Caco-2 (cell line): ENCODE measurements at regions of chr11 and their contacts with region 1.

Region 1: DNA sequence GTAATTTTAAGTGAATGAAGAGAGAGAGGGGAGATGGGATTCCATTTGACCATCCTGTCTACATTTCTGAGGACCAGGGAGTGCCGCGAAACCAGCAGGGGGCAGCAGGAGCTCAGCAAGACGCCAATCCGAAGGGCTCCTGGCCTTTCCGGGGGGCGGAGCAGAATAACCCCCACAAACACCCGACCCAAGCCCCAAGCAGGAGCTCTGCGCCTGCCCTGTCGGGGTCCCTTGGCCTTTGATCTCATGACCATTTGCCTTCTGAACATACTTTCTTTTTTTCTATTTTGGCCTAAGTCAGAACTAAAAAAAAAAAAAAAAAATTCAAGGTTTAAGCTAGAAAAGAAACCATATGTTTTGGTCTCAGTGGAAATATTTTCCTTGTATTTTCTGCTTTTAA is 21.9 kb upstream of the SCN2B start:
- DNase-seq: peak; percentile 91 to 94
- H3K4me3 ChIP-seq: no peak overlapping the region
- H3K4me3 Mint-ChIP-seq: peak overlapping the region; percentile 2
- H3K27ac Mint-ChIP-seq: peak overlapping the region; percentile 36
- H3K4me1 ChIP-seq: peaks cover 85% of the 10 kb centered on the region
- H3K4me1 Mint-ChIP-seq: peaks cover 44% of the 10 kb centered on the region
- H3K27me3 ChIP-seq: no peaks in the 10 kb centered on the region
- H3K27me3 Mint-ChIP-seq: no peaks in the 10 kb centered on the region
- CTCF ChIP-seq: peak; percentile 99

Region 2: DNA sequence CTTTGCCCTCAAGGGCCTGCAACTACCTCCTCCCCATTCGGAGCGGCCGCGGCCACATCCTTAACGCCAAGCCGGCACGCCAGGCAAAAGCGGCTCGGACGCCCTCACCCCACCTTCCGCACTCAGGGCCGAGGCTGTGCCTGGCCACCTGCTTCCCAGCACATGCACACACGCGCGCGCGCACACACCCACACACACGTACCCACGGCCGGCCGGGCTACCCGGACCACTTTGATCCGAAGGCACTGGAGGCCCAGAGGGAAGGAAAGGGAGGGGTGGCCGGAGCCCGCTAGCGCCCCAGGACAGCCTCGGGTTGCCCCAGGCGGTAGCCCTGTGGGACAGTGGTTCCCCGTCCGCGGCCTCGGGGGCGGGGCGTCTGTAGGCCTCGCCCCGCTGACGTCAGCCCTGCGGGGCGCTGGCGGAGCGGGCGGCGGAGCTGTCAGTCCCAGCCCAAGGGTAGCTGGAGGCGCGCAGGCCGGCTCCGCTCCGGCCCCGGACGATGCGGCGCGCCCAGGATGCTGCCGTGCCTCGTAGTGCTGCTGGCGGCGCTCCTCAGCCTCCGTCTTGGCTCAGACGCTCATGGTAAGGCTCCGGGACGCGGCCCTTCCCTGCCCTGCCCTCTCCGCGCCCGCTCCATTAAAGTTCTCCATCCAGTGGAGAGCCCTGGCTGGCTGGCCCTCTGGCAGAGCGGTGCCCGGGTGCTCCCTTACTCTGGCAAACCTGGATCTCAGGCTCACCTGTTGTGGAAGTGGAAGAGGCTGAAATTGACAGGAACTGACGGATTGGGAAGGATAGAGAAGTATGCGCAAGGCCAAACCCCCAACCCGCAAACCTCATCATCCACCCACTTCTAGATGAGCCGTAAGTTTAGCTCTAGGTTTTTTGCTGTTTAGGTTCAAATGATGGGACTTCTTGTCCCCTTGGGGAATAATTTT is 212.2 kb before region 1 on chr11 and contains the start of gene IL10RA:
- CTCF ChIA-PET with region 1: no interaction called
- POLR2A ChIA-PET with region 1: no interaction called
- intact Hi-C with region 1: no loop called
- DNase-seq: peak; percentile 87 to 95
- H3K4me3 ChIP-seq: peak within 1 kb of the TSS; percentile 74
- H3K4me3 Mint-ChIP-seq: peak within 1 kb of the TSS; percentile 60
- H3K27ac Mint-ChIP-seq: peak within 1 kb of the TSS; percentile 48
- H3K4me1 ChIP-seq: peaks cover 17% of the 10 kb centered on the region
- H3K4me1 Mint-ChIP-seq: peaks cover 19% of the 10 kb centered on the region
- H3K27me3 ChIP-seq: peaks cover 3% of the 10 kb centered on the region; the same call in 1 of the 2 replicates
- H3K27me3 Mint-ChIP-seq: peaks cover 18% of the 10 kb centered on the region
- CTCF ChIP-seq: no peak
- total RNA-seq, gene IL10RA: 0.65 and 1.6 TPM in 2 replicates

Region 3: DNA sequence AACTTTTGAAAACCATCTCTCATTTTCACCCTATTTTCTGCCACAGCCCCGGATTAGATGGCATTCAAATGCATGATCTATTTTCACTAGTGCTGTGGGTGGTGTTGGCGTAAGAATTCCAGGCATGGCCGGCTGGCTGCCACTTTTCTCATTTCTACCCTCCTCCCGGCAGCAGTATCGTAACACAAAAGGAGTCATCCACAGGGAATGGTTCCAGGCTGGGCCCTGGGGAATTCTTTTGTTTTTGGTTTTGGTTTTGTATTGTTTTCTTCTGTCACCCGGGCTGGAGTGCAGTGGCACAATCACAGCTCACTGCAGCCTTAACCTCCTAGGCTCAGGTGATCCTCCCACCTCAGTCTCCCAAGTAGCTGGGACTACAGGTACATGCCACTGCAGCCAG is 12.6 kb after region 1 on chr11:
- CTCF ChIA-PET with region 1: interaction called, 75 read pairs
- POLR2A ChIA-PET with region 1: interaction called, 13 read pairs
- intact Hi-C with region 1: loop called (anchors 1 kb)
- DNase-seq: no peak
- H3K4me3 ChIP-seq: no peak overlapping the region
- H3K4me3 Mint-ChIP-seq: no peak overlapping the region
- H3K27ac Mint-ChIP-seq: peak overlapping the region; percentile 67
- H3K4me1 ChIP-seq: peaks cover 78% of the 10 kb centered on the region
- H3K4me1 Mint-ChIP-seq: peaks cover 53% of the 10 kb centered on the region
- H3K27me3 ChIP-seq: no peaks in the 10 kb centered on the region
- H3K27me3 Mint-ChIP-seq: no peaks in the 10 kb centered on the region
- CTCF ChIP-seq: no peak

Region 4: DNA sequence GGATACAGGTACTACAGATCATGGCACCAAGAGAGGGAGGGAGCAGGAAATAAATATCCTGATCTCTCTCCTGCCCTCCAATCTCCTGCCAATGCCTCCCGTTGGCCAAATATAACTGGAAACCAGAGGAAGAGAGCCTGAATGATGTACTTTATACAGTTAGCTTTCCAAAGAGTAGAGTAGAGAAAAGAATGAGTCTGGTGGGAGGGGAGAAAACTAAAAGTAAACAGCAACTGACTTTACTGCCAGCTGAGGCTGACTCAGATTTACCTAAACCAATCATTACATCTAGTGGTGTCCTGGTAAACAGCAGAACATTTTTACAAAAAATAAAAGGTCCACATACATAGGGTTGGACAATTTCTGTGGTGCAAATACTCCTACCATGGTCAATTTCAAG is 48.7 kb after region 1 on chr11:
- CTCF ChIA-PET with region 1: interaction called, 35 read pairs
- POLR2A ChIA-PET with region 1: interaction called, 16 read pairs
- intact Hi-C with region 1: loop called (anchors 1 kb)
- DNase-seq: no peak
- H3K4me3 ChIP-seq: no peak overlapping the region
- H3K4me3 Mint-ChIP-seq: no peak overlapping the region
- H3K27ac Mint-ChIP-seq: no peak overlapping the region
- H3K4me1 ChIP-seq: peaks cover 15% of the 10 kb centered on the region
- H3K4me1 Mint-ChIP-seq: peaks cover 51% of the 10 kb centered on the region
- H3K27me3 ChIP-seq: no peaks in the 10 kb centered on the region
- H3K27me3 Mint-ChIP-seq: no peaks in the 10 kb centered on the region
- CTCF ChIP-seq: no peak

Region 5: DNA sequence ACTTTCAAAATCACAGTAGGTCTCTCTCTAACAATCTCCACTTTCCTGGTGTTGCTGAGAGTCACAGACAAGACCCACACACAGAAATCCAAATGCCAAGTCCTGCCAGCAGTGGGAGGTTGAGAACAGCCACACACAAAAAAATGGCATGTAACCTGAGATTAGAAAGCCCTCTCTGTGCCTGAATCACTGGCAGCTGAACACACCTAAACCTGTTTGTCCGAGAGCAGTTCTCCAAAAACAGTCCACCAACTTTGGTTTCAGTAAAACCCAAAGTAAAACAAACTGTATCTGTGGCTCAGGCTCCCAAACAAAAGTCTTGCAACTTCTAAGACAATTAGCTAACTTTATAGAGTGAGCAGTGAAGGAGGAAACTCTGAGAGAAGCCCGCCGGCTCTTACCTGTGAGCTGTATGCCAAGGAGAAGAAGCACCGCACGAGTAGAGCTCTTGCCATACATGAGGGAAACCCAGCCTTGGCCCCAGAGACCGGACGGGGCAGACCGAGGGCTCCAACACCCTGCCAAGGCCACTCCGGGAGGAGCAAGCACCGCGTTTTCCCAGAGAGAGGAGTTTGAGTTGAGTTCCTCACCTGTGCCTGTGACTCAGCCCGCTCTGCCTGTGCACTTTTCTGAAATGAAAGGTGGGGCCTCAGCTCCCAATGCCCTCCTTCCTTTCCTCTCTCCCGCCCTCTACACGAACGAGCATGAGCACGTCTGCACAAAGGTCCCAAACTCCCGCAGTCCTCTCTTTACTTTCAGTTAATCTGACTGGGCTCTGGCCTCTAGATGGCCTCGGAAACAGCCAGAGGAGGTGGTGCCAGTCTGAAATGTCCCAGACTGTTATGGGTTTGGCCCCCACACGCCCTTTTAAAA is 65.6 kb after region 1 on chr11 and contains the start of gene MPZL2:
- CTCF ChIA-PET with region 1: interaction called, 34 read pairs
- POLR2A ChIA-PET with region 1: interaction called, 4 read pairs
- intact Hi-C with region 1: loop called (anchors 1 kb)
- DNase-seq: peak; percentile 90 to 93
- H3K4me3 ChIP-seq: peak within 1 kb of the TSS; percentile 83
- H3K4me3 Mint-ChIP-seq: peak within 1 kb of the TSS; percentile 91
- H3K27ac Mint-ChIP-seq: peak within 1 kb of the TSS; percentile 96
- H3K4me1 ChIP-seq: peaks cover 23% of the 10 kb centered on the region; the same call in 1 of the 2 replicates
- H3K4me1 Mint-ChIP-seq: peaks cover 15% of the 10 kb centered on the region
- H3K27me3 ChIP-seq: no peaks in the 10 kb centered on the region
- H3K27me3 Mint-ChIP-seq: no peaks in the 10 kb centered on the region
- CTCF ChIP-seq: peak; percentile 30 to 59
- total RNA-seq, gene MPZL2: 69.9 and 80.2 TPM in 2 replicates

Region 6: DNA sequence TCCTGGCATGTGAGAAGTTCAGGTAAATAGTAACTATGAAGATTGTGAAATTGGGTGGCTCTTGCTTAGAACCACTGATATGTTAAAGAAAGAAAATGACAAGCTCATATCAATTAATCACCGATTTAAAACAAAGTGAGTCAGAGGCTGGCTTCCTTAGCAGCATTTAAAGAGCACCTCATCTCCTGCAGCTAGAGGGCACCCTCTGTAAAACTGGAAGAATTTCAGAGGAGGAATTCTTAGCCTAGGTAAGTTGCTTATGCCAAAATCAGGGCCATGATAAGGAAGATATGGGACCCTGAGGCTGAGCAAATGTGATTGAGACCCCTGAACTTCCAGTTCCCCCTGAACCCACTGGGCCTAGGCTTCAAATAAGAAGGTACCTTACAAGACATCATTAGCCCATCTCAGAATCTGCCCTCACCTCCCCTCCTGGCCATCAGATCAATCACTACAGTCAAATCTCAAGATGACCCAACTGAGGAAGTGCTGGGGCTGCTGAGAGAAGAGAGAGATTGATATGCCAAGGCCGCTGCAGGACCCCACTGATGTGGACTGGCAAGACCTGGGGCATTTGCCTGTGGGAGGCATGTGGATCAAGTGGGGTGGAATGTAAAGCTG is 97.6 kb after region 1 on chr11:
- CTCF ChIA-PET with region 1: interaction called, 41 read pairs
- POLR2A ChIA-PET with region 1: no interaction called
- intact Hi-C with region 1: loop called (anchors 1 kb)
- DNase-seq: peak; percentile 63 to 69
- H3K4me3 ChIP-seq: no peak overlapping the region
- H3K4me3 Mint-ChIP-seq: no peak overlapping the region
- H3K27ac Mint-ChIP-seq: peak overlapping the region; percentile 14
- H3K4me1 ChIP-seq: peaks cover 9% of the 10 kb centered on the region
- H3K4me1 Mint-ChIP-seq: peaks cover 18% of the 10 kb centered on the region
- H3K27me3 ChIP-seq: no peaks in the 10 kb centered on the region
- H3K27me3 Mint-ChIP-seq: no peaks in the 10 kb centered on the region
- CTCF ChIP-seq: peak; percentile 73 to 86

Region 7: DNA sequence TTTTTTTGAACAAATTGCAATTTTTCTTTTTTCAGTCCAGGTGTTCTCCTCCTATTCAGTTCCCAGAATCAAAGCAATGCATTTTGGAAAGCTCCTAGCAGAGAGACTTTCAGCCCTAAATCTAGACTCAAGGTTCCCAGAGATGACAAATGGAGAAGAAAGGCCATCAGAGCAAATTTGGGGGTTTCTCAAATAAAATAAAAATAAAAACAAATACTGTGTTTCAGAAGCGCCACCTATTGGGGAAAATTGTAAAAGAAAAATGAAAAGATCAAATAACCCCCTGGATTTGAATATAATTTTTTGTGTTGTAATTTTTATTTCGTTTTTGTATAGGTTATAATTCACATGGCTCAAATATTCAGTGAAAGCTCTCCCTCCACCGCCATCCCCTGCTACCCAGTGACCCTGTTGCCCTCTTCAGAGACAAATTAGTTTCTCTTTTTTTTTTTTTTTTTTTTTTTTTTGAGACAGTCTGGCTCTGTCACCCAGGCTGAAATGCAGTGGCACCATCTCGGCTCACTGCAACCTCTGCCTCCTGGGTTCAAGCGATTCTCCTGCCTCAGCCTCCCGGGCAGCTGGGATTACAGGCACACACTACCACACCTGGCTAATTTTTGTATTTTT is 154.8 kb after region 1 on chr11:
- CTCF ChIA-PET with region 1: interaction called, 11 read pairs
- POLR2A ChIA-PET with region 1: no interaction called
- intact Hi-C with region 1: loop called (anchors 1 kb)
- DNase-seq: peak in 1 of 2 experiments; percentile 47
- H3K4me3 ChIP-seq: no peak overlapping the region
- H3K4me3 Mint-ChIP-seq: no peak overlapping the region
- H3K27ac Mint-ChIP-seq: no peak overlapping the region
- H3K4me1 ChIP-seq: peaks cover 8% of the 10 kb centered on the region; the same call in 1 of the 2 replicates
- H3K4me1 Mint-ChIP-seq: peaks cover 9% of the 10 kb centered on the region
- H3K27me3 ChIP-seq: no peaks in the 10 kb centered on the region
- H3K27me3 Mint-ChIP-seq: no peaks in the 10 kb centered on the region
- CTCF ChIP-seq: peak; percentile 55 to 81